Caco-2 (cell line): ENCODE measurements at regions of chr1 and their contacts with region 1.

Region 1: DNA sequence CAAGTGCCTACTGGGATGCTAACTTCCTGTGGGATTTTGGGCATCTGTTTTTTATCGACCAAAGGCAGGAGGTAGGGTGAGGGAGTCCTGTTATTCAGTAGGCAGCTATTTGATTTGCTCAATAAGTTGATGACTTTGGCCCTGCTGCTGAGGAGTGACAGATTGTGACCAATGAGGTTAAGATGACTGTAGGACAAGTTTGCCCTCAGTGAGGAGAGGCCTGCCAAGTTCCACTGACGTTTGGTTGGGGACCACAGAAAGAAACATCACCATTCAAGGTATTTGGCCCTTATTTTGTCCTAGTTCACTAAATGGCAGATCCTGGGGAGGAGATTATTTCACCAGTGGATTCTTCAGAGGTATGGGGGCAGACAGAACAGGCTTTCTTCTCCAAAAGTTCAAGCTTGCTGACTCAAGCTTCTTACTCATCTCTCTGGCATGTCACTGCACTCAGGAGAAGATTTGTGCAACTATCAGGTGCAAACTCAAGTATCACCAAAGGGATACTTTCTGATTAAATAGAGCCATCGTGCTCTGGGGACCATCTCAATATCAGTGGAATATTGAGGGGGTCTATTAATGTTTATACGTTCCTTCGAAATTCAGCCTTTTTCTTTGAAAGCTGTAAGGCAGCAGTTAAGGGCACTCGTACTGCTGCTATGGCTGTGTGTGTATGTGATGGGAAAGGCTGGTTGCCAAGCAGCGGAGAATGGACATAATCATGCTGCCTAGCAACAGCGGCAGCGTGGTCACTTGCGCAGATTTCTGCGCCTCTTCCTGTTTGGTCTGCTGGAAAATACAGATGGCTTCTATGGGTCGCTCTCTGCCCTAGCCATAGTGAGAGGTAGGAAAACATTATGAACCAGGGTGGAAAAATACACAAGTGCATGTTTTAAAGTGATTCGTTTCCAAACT is 78.7 kb downstream of the PBX1 start:
- DNase-seq: peak in 1 of 2 experiments; percentile 41
- H3K4me3 ChIP-seq: no peak overlapping the region
- H3K4me3 Mint-ChIP-seq: no peak overlapping the region
- H3K27ac Mint-ChIP-seq: peak overlapping the region; percentile 85
- H3K4me1 ChIP-seq: peaks cover 69% of the 10 kb centered on the region
- H3K4me1 Mint-ChIP-seq: peaks cover 50% of the 10 kb centered on the region
- H3K27me3 ChIP-seq: no peaks in the 10 kb centered on the region
- H3K27me3 Mint-ChIP-seq: no peaks in the 10 kb centered on the region
- CTCF ChIP-seq: no peak

Region 2: DNA sequence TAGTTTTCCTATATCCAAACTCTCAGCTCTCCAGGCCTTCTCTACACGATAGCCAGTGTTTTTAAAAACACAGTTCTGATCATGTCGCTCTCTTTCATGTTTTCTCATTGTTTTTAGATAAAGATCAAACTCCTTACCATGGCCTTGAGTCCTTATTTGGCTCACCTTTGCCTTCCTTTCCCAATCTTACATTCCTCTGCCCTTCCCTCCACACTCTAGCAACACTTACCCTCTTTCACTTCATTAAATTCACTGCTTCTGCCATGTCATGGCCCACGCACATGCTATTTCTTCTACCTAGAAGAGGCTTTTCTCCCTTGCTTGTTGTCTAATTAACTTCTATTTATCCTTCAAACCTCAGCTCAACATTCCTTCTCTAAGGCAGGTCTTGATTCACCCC is 104.6 kb before region 1 on chr1:
- CTCF ChIA-PET with region 1: no interaction called
- POLR2A ChIA-PET with region 1: no interaction called
- intact Hi-C with region 1: no loop called
- DNase-seq: no peak
- H3K4me3 ChIP-seq: no peak overlapping the region
- H3K4me3 Mint-ChIP-seq: no peak overlapping the region
- H3K27ac Mint-ChIP-seq: no peak overlapping the region
- H3K4me1 ChIP-seq: peaks cover 35% of the 10 kb centered on the region
- H3K4me1 Mint-ChIP-seq: peaks cover 14% of the 10 kb centered on the region
- H3K27me3 ChIP-seq: no peaks in the 10 kb centered on the region
- H3K27me3 Mint-ChIP-seq: no peaks in the 10 kb centered on the region
- CTCF ChIP-seq: no peak

Region 3: DNA sequence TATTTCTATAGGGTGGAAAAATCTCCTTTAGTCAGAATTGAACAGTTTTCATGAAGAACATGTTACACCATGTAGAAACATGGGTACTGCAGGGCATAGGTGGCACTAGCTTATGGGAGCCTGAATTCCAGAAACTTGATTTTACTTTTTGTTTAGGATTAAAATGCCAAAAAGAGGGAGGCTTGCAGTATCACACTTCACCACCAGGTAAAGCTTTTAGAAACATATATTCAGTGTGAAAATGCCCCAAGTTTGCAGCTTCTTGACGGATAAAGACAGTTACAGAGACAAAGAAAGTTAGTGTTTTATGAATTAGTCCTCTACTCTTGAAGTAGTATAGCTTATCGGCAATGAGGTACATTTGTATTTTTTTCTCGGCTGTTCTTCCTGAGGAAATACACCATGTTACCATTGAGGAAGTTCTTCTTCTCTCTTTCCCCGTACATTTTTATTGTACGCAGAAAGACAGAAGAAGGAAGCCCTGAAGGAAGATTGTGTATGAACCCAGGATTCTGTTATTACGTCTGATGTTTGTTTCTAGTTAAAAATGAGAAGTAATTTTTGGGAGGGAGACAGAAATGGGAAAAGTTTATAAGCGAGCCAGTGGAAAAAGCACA is 12.6 kb before region 1 on chr1:
- CTCF ChIA-PET with region 1: interaction called, 3 read pairs
- POLR2A ChIA-PET with region 1: no interaction called
- intact Hi-C with region 1: loop called (anchors 2 kb)
- DNase-seq: no peak
- H3K4me3 ChIP-seq: no peak overlapping the region
- H3K4me3 Mint-ChIP-seq: no peak overlapping the region
- H3K27ac Mint-ChIP-seq: no peak overlapping the region
- H3K4me1 ChIP-seq: peaks cover under 1% of the 10 kb centered on the region
- H3K4me1 Mint-ChIP-seq: peaks cover 40% of the 10 kb centered on the region
- H3K27me3 ChIP-seq: no peaks in the 10 kb centered on the region
- H3K27me3 Mint-ChIP-seq: no peaks in the 10 kb centered on the region
- CTCF ChIP-seq: peak; percentile 30 to 42

Region 4: DNA sequence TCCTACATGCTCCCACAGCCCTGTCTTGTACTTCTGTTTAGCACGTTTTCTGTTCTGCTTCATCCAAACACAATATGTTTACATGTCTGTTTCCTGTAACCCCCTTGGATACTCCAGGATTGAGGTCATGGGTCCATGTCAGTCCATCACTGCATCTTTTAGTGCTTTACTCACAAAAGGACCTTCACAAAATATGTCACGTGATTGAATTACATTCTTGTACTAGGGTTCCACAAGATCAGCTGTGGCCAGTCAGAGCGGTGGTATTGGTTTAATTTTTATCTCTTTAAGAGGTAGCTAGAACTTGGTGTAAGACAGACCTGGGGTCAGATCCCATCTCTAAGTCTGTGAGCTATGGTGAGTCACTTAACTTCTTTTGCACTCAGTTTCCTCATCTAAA is 1730.3 kb after region 1 on chr1:
- CTCF ChIA-PET with region 1: no interaction called
- POLR2A ChIA-PET with region 1: no interaction called
- intact Hi-C with region 1: no loop called
- DNase-seq: no peak
- H3K4me3 ChIP-seq: no peak overlapping the region
- H3K4me3 Mint-ChIP-seq: no peak overlapping the region
- H3K27ac Mint-ChIP-seq: no peak overlapping the region
- H3K4me1 ChIP-seq: no peaks in the 10 kb centered on the region
- H3K4me1 Mint-ChIP-seq: no peaks in the 10 kb centered on the region
- H3K27me3 ChIP-seq: no peaks in the 10 kb centered on the region
- H3K27me3 Mint-ChIP-seq: peaks cover 14% of the 10 kb centered on the region
- CTCF ChIP-seq: no peak